Naive thymus-derived CD8-positive, alpha-beta T cell (primary cell): ENCODE measurements at regions of chr9 and their contacts with region 1.

Region 1: DNA sequence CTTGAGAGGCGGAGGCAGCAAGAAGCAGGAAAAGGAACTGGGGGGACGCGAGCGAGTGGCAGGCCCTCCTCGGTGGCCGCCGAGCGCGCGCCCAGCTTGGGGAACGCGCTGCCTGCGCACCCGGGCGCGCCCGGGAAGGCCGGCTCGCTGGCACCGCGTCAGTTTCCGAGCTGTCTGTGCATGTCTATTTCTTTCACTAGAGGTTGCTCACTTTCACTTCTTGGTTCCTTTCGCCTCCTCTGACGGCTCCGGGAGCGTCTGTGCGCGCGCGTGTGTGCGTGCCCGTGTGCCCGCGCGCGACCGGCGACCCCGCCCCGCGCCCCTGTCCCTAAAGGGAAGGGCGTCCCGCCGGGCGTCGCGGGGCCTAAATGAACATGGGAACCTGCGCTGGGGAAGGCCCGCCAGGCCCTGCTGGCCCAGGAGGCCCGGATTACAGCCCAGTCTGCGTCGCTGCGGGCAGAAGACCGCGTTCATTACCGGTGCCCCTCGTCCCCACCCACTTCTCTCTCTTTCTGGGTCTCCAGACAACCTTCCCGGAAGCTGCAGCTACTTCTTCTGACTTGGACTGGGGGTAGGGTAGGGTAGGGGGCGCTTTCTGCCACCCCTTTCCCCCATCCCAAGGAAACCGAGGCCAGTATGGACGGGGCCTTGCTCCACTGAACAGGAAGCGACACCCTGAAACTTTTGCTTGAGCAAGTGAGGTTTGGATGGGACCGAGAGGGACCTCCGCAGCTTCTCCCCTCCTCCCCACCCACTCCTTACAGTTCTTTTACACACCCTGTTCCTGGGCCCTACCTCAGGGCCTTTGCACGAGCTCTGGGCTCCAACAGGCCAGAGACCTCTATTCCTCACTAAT is 205.7 kb upstream of the IER5L start:
- DNase-seq: peak; percentile 67 to 89 (median 78)
- ATAC-seq: peak; percentile 89 to 91
- H3K4me3 Mint-ChIP-seq: peak overlapping the region; percentile 76 to 89 (median 82)
- H3K27ac Mint-ChIP-seq: peak overlapping the region; percentile 90 to 99 (median 97)
- H3K4me1 Mint-ChIP-seq: peaks cover 9 to 23% (median 17%) of the 10 kb centered on the region in 4 donors
- H3K27me3 Mint-ChIP-seq: no peaks in the 10 kb centered on the region

Region 2: DNA sequence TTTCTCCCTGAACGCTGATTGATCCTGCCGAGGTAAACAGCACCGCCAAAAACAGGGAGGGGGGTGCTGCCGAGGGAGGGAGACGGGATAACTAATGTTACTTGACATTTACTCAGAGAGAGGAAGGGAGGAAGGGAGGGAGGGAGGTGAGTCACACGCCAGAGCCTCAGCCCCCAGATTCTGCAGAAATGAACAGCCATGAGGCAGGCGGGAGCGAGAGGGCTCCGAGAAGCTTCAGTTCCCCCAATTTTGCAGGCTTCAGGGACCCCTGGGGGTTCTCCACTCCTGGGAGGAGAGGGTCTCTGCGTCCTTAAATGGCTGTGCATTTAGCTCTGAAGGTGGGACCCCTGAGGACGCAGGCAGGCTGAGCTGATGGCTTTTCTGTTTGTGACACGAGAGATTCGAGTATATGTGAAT is 146.6 kb before region 1 on chr9:
- POLR2A ChIA-PET with region 1: interaction called, 18 read pairs
- DNase-seq: peak in 7 of 10 donors; percentile 31 to 70 (median 45)
- ATAC-seq: peak; percentile 39 to 65
- H3K4me3 Mint-ChIP-seq: peak overlapping the region; percentile 87 to 97 (median 92)
- H3K27ac Mint-ChIP-seq: peak overlapping the region; percentile 92 to 99 (median 96)
- H3K4me1 Mint-ChIP-seq: peaks cover 41 to 83% (median 70%) of the 10 kb centered on the region in 4 donors
- H3K27me3 Mint-ChIP-seq: peaks cover 0 to 1% (median 0%) of the 10 kb centered on the region in 5 donors

Region 3: GRCh38 chr9:129333953-129334724 is 49.6 kb before region 1 on chr9:
- POLR2A ChIA-PET with region 1: interaction called, 17 read pairs
- DNase-seq: peak in 7 of 10 donors; percentile 23 to 68 (median 28)
- ATAC-seq: peak; percentile 60 to 66
- H3K4me3 Mint-ChIP-seq: peak overlapping the region; percentile 26 to 97 (median 81)
- H3K27ac Mint-ChIP-seq: peak overlapping the region; percentile 12 to 94 (median 86)
- H3K4me1 Mint-ChIP-seq: peaks cover 22 to 41% (median 32%) of the 10 kb centered on the region in 4 donors
- H3K27me3 Mint-ChIP-seq: no peaks in the 10 kb centered on the region

Region 4: DNA sequence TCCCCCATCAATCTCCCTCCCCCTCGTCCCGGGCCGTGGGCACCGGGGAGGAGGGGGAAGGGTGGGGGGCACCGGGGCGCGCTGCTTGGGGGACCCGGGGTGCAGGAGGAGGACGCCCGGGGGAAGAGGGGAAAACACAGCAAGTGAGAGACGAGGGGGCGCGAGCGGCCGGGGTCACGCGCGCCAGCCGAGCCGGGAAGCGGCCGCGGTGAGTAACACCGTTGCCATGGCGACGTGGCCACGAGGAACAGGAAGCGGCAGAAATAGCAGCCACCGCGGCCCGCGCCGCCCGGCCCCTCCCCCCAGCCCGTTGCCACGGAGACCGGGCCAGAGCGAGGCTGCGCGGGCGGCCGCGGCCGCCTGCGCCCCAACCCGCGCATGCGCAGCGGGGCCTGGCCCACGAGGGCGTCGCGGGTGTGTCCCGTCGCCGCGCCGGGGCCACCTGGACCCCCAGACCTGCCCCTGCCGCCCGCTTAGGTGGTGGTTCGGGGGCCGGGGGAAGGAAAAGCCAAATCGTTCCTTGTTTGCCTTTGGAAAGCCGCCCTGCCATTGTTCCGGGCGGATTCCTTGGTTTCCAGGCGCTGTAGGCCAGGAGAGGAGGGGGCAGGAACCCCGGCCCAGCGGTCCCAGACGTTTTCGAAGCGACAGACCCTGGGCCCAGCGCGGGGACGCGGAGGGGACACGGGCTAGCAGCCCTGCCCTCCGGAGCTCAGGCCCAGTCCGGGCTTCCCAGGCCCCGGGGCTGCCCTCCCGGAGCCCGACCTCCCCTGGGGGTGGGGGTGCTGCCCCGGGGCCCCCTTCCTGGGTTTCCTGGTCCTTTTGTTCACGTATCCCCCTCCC is 30.0 kb after region 1 on chr9:
- POLR2A ChIA-PET with region 1: interaction called, 37 read pairs
- DNase-seq: peak; percentile 96 to 100 (median 98)
- ATAC-seq: peak; percentile 77 to 82
- H3K4me3 Mint-ChIP-seq: peak overlapping the region; percentile 78 to 94 (median 86)
- H3K27ac Mint-ChIP-seq: peak overlapping the region; percentile 96 to 99 (median 99)
- H3K4me1 Mint-ChIP-seq: peaks cover 15 to 54% (median 41%) of the 10 kb centered on the region in 4 donors
- H3K27me3 Mint-ChIP-seq: peaks cover 0 to 3% (median 0%) of the 10 kb centered on the region in 5 donors

Region 5: GRCh38 chr9:129460323-129461261 is 76.8 kb after region 1 on chr9:
- POLR2A ChIA-PET with region 1: interaction called, 12 read pairs
- DNase-seq: peak; percentile 59 to 94 (median 75)
- ATAC-seq: peak; percentile 75 to 77
- H3K4me3 Mint-ChIP-seq: peak overlapping the region; percentile 68 to 92 (median 81)
- H3K27ac Mint-ChIP-seq: peak overlapping the region; percentile 29 to 93 (median 90)
- H3K4me1 Mint-ChIP-seq: peaks cover 17 to 50% (median 36%) of the 10 kb centered on the region in 4 donors
- H3K27me3 Mint-ChIP-seq: no peaks in the 10 kb centered on the region